Activated CD4-positive, alpha-beta memory T cell treated with anti-CD3 and anti-CD28 coated beads for 36 hours (primary cell): ENCODE measurements at regions of chr7 and their contacts with region 1.

Region 1: DNA sequence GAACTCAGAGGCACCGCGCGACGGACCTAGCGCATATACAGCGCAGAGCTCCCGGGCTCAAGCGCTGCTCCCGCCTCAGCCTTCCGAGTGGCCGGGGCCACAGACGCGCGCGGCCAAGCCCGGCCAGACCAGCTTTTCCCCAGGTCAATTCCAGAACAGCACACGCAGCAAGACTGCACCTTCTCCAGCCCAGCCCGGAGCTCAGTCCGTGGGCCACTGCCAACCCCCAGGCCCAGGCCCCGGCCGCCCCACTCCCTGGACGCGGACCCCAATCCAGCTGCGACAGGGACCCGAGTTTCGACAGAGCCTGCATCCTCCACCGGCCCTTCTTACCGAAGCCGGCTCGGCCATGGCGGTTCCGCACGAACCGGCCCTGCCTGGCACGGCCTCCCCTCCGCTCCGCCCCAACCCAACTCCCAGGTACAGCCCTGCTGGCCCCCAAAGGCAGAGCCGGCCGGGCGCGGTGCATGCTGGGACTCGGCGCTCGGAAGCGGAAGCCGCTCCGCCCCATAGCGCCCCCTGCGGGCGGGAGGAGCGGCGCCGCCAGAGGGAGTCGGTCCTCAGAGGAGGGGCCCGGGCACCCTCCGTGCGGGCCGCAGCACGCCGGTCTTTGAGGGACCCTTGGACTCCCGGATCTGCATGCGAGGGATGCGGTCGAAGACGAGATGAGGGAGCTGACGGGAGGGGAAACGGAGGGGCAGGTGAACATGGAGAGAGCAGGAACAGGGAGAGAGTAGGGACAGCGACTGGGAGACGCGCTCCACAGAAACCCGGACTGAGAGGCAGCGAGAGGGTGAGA is at the start of gene ZNF425:
- DNase-seq: peak; percentile 95
- H3K4me3 Mint-ChIP-seq: peak within 1 kb of the TSS; percentile 98
- H3K27ac Mint-ChIP-seq: peak within 1 kb of the TSS; percentile 98
- H3K4me1 Mint-ChIP-seq: peaks cover 18% of the 10 kb centered on the region
- H3K27me3 Mint-ChIP-seq: no peaks in the 10 kb centered on the region
- total RNA-seq, gene ZNF425: 0.74 to 0.75 TPM

Region 2: DNA sequence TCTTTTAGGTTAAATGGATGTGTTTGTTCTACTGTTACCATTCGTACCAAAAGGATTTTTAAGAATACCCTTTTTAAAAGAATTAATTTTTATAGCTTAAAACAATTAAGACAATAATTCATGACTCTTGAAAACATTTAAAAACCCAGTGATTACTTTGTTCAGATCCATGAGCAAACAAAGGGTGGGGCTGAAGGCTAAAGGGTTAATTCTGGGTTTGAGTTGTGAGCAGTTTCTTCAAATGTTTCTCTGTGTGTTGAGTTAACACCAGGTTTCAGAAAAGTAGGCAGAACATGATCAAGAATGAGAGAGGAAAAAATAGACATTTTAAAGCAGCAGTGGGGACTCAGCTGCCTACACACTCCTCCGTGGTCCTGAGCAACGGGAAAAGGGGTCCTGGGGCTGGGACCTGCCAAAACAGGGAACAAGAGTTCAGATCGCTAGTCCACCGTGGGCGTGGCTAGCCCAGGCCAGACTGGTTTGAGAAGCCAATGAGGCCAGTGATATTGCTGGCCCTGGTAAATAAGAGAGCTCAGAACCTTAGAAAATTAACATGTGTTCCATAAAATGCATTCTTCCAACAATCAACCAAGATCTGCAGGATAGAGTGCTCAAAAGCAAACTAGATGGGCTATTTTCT is 227.1 kb before region 1 on chr7:
- CTCF ChIA-PET with region 1: no interaction called
- POLR2A ChIA-PET with region 1: no interaction called
- intact Hi-C with region 1: no loop called
- DNase-seq: no peak
- H3K4me3 Mint-ChIP-seq: no peak overlapping the region
- H3K27ac Mint-ChIP-seq: no peak overlapping the region
- H3K4me1 Mint-ChIP-seq: peaks cover 14% of the 10 kb centered on the region
- H3K27me3 Mint-ChIP-seq: peaks cover 2% of the 10 kb centered on the region

Region 3: GRCh38 chr7:149090397-149091195 is 35.5 kb before region 1 on chr7 and contains the start of gene ZNF786:
- CTCF ChIA-PET with region 1: interaction called, 7 read pairs
- POLR2A ChIA-PET with region 1: no interaction called
- intact Hi-C with region 1: loop called (anchors 1 kb)
- DNase-seq: peak; percentile 96
- H3K4me3 Mint-ChIP-seq: peak within 1 kb of the TSS; percentile 96
- H3K27ac Mint-ChIP-seq: peak within 1 kb of the TSS; percentile 99
- H3K4me1 Mint-ChIP-seq: peaks cover 21% of the 10 kb centered on the region
- H3K27me3 Mint-ChIP-seq: no peaks in the 10 kb centered on the region
- total RNA-seq, gene ZNF786: 4.5 to 6.1 TPM

Region 4: DNA sequence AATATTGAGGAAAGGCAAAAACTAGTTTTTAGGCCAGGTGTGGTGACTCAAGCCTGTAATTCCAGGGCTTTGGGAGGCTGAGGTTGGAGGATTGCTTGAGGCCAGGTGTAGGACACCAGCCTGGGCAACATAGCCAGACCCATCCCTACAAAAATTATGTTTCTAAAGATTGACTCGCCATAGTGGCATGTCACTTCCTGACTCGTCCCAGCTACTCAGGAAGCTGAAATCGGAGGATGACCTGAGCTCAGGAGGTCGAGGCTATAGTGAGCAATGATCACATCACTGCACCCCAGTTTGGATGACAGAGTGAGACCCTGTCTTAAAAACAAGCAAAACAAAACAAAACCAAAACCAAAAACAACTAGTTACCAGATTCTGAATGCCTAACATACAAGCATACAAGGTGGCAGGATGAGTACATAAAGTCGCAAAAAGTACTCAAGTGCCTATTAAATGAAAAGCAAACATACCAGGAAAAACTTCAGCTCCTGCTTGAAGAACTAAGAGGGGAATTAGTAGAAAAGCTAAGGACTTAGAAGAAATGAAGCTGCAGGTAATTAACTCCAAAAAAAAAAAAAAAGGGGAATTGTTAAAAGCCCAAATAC is 35.3 kb after region 1 on chr7:
- CTCF ChIA-PET with region 1: no interaction called
- POLR2A ChIA-PET with region 1: no interaction called
- intact Hi-C with region 1: no loop called
- DNase-seq: peak; percentile 44
- H3K4me3 Mint-ChIP-seq: no peak overlapping the region
- H3K27ac Mint-ChIP-seq: peak overlapping the region; percentile 76
- H3K4me1 Mint-ChIP-seq: peaks cover 20% of the 10 kb centered on the region
- H3K27me3 Mint-ChIP-seq: no peaks in the 10 kb centered on the region

Region 5: DNA sequence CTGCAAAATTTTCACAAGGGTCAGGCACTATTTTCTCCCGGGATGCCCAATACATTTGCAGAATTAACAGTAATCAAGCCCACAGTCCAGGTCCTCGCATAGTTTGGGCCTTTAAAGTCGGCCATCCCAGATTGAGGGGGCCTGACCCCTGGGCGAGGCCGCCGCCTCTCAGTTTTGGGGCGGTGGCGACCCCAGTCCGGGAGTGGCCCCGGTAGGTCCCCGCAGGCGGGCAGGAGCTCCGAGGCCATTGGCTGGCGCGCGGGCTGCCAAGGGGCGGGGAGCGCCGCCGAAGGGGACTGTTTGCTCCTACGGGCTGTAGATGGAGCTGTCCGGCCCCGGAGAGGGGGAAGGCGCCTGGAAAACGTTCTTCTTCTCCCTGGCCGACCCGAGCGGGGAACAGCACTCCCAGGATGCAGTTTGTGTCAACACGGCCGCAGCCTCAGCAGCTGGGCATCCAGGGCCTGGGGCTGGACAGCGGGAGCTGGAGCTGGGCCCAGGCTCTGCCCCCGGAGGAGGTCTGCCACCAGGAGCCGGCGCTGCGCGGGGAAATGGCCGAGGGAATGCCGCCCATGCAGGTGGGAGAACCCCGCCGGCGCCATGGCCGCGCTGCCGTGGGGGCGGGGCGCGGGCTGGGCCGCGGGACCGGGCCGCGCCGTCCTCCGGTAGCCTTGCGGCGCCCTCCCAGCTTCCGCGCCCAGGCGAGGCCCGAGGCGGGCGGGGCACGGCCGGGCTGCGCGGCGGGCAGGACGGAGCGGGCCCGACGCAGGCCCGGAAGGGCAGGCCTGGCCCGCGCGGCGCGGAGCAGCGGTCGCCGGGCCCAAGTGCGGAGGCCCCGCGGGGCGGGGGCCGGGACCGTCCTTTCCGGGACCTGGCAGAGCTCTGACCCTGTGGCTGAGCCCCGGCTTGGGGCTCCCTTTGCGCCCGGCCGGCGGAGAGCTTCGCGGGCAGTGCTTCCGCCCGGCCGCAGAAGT is 69.4 kb after region 1 on chr7 and contains the start of gene ZNF282:
- CTCF ChIA-PET with region 1: no interaction called
- POLR2A ChIA-PET with region 1: interaction called, 7 read pairs
- intact Hi-C with region 1: loop called (anchors 5 kb)
- DNase-seq: peak; percentile 89
- H3K4me3 Mint-ChIP-seq: peak within 1 kb of the TSS; percentile 92
- H3K27ac Mint-ChIP-seq: peak within 1 kb of the TSS; percentile 93
- H3K4me1 Mint-ChIP-seq: peaks cover 51% of the 10 kb centered on the region
- H3K27me3 Mint-ChIP-seq: no peaks in the 10 kb centered on the region
- total RNA-seq, gene ZNF282: 61.7 to 61.9 TPM

Region 6: DNA sequence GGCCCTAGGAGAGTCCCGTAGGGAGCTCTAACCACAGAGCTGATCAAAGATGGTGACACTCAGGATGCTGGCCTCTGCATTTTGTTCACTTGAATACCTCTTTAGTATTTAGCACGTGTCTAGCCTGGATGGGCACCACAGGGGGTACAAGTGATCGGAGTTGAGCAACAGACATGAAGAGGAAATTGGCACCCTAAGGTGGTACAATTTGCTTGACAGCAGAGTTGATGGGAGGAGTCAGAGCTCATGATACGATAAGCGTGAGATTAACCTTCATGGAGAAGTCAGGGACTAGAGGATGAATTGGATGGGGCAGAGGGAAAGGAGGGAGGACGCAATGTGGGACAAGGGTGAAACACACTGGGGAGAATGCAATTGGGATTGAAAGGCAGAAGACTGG is 103.5 kb after region 1 on chr7:
- CTCF ChIA-PET with region 1: no interaction called
- POLR2A ChIA-PET with region 1: no interaction called
- intact Hi-C with region 1: no loop called
- DNase-seq: no peak
- H3K4me3 Mint-ChIP-seq: no peak overlapping the region
- H3K27ac Mint-ChIP-seq: no peak overlapping the region
- H3K4me1 Mint-ChIP-seq: no peaks in the 10 kb centered on the region
- H3K27me3 Mint-ChIP-seq: peaks cover 8% of the 10 kb centered on the region